ENCODE measurements at regions of chr6 and their contacts with region 1.

Region 1: DNA sequence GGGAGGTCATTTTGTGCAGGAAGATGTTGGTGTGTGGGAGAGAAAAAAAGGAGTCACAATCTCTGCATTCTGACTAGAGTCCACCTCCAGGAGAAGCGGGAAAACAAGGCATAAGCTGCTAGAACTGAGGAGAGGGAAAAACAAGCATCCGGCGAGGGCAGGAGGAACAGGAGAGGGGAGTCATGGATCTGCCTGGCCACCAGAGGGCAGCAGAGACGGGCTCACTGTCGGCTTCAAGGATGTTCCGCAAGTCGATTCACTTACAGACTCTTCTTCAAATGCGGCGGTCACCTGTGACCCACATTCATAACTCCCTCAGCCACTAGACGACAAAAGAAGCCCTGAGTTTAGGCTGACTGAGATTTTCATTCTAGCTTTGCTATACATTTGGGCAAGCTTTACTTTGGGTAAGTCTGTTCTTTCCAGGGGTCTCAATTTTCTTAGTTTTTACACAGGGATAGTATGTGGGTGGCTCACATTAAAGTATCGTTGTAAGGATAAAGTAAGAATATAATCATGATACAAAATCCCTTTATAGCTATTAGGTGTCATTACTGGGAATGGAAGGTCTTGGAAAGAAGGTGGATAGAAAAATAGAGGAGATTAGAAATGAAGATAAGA is 6.6 kb upstream of the BTNL2 start:
- DNase-seq: peak; percentile 74 to 91 (median 87)
- ATAC-seq: peak; percentile 81
- H3K4me3 ChIP-seq: no peak overlapping the region
- H3K4me3 Mint-ChIP-seq: no peak overlapping the region
- H3K27ac ChIP-seq: no peak overlapping the region
- H3K27ac Mint-ChIP-seq: no peak overlapping the region
- H3K4me1 ChIP-seq: peaks cover 4% of the 10 kb centered on the region
- H3K4me1 Mint-ChIP-seq: peaks cover 9% of the 10 kb centered on the region
- H3K27me3 ChIP-seq: peaks cover 0 to 19% of the 10 kb centered on the region in 2 experiments
- H3K27me3 Mint-ChIP-seq: peaks cover 44% of the 10 kb centered on the region
- CTCF ChIP-seq: peak; percentile 86

Region 2: DNA sequence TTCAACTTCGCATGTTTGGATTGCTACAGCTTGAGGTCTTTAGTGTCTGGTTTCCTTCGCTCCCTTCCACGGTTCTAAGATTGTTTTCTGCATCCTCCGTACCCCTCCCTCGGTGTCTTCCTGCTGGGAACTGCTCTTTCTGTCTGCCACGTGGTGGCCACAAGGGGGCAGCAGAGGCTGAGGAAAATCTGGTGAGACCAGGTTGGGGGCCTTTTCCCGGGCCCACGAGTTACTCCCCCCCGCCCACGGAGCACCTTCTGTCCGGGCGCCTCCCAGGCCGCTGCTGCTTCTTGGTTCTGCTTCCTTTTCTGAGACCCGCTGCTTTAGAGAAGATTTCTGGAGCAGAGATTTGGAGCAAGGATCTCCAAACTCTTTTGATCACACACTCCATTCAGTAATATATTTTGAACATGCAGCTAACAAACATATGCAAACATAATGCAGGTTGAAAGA is 168.6 kb before region 1 on chr6:
- CTCF ChIA-PET with region 1: interaction called, 3 read pairs
- POLR2A ChIA-PET with region 1: no interaction called
- intact Hi-C with region 1: loop called in 1 of 2 experiments (anchors 1 kb)
- DNase-seq: peak; percentile 38 to 83 (median 75)
- ATAC-seq: peak; percentile 69
- H3K4me3 ChIP-seq: peak overlapping the region in 1 of 2 experiments; percentile 18
- H3K4me3 Mint-ChIP-seq: peak overlapping the region; percentile 44
- H3K27ac ChIP-seq: no peak overlapping the region
- H3K27ac Mint-ChIP-seq: no peak overlapping the region
- H3K4me1 ChIP-seq: peaks cover 5% of the 10 kb centered on the region
- H3K4me1 Mint-ChIP-seq: peaks cover 5% of the 10 kb centered on the region
- H3K27me3 ChIP-seq: no peaks in the 10 kb centered on the region
- H3K27me3 Mint-ChIP-seq: peaks cover 2% of the 10 kb centered on the region
- CTCF ChIP-seq: peak; percentile 94

Region 3: GRCh38 chr6:32424589-32425300 is 11.2 kb after region 1 on chr6:
- CTCF ChIA-PET with region 1: interaction called, 42 read pairs
- POLR2A ChIA-PET with region 1: no interaction called
- intact Hi-C with region 1: no loop called
- DNase-seq: no peak
- ATAC-seq: no peak
- H3K4me3 ChIP-seq: no peak overlapping the region
- H3K4me3 Mint-ChIP-seq: no peak overlapping the region
- H3K27ac ChIP-seq: no peak overlapping the region
- H3K27ac Mint-ChIP-seq: no peak overlapping the region
- H3K4me1 ChIP-seq: no peaks in the 10 kb centered on the region
- H3K4me1 Mint-ChIP-seq: no peaks in the 10 kb centered on the region
- H3K27me3 ChIP-seq: no peaks in the 10 kb centered on the region
- H3K27me3 Mint-ChIP-seq: peaks cover 18% of the 10 kb centered on the region
- CTCF ChIP-seq: no peak

Region 4: GRCh38 chr6:32700391-32701040 is 287.0 kb after region 1 on chr6:
- CTCF ChIA-PET with region 1: interaction called, 150 read pairs
- POLR2A ChIA-PET with region 1: no interaction called
- intact Hi-C with region 1: loop called (anchors 1 kb)
- DNase-seq: peak in 6 of 9 experiments; percentile 2 to 71 (median 46)
- ATAC-seq: peak; percentile 49
- H3K4me3 ChIP-seq: no peak overlapping the region
- H3K4me3 Mint-ChIP-seq: no peak overlapping the region
- H3K27ac ChIP-seq: no peak overlapping the region
- H3K27ac Mint-ChIP-seq: no peak overlapping the region
- H3K4me1 ChIP-seq: no peaks in the 10 kb centered on the region
- H3K4me1 Mint-ChIP-seq: peaks cover 4% of the 10 kb centered on the region
- H3K27me3 ChIP-seq: no peaks in the 10 kb centered on the region
- H3K27me3 Mint-ChIP-seq: peaks cover 40% of the 10 kb centered on the region
- CTCF ChIP-seq: peak; percentile 86

Region 5: GRCh38 chr6:32796848-32797776 is 383.6 kb after region 1 on chr6:
- CTCF ChIA-PET with region 1: interaction called, 80 read pairs
- POLR2A ChIA-PET with region 1: interaction called, 3 read pairs
- intact Hi-C with region 1: loop called (anchors 1 kb)
- DNase-seq: peak; percentile 60 to 88 (median 81)
- ATAC-seq: peak; percentile 79
- H3K4me3 ChIP-seq: peak overlapping the region in 1 of 2 experiments; percentile 33
- H3K4me3 Mint-ChIP-seq: peak overlapping the region; percentile 64
- H3K27ac ChIP-seq: no peak overlapping the region
- H3K27ac Mint-ChIP-seq: no peak overlapping the region
- H3K4me1 ChIP-seq: peaks cover 17% of the 10 kb centered on the region
- H3K4me1 Mint-ChIP-seq: peaks cover 27% of the 10 kb centered on the region
- H3K27me3 ChIP-seq: peaks cover 0 to 6% of the 10 kb centered on the region in 2 experiments
- H3K27me3 Mint-ChIP-seq: peaks cover 36% of the 10 kb centered on the region
- CTCF ChIP-seq: peak; percentile 97